HEK293 (cell line): ENCODE measurements at regions of chr6 and their contacts with region 1.

Region 1: DNA sequence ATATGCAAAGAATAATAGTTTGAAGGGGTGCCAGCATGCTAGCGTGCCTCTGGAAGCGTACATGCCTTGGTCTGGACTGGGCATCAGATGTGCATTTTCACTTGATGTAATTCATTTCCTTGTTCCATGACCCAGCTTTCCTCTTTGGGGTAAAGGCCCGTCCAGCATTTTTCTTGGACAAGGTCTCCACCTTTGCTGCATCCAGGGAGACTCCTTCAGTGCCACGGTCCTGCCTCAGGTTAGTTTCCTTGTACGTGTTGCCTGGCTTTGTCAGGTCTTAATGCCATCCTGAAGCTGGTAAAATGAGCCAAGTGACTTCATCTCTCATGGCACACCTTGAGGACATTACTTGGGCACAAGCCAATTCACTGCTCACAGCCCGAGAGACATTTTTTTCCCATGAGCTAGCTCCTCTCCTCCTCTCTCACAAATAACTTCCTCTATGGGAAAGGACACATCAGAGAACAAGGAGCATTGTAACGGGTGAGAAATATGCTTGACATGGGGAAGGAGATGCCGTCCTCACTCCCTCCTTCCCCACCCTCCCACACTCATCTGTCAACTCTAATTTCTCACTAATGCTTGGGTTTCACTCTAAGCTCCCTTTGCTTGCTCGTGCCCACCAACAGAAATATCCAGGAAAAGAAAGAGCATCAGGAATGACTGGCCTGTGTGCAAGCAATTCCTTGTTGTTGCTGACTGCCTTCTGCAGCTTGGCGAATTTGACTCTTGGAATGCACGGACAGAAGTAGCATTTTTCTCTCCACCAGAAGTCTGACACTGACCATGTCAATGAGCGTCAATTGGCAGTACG is 24.0 kb downstream of the EDN1 start:
- H3K4me3 ChIP-seq: no peak overlapping the region
- H3K27ac ChIP-seq: no peak overlapping the region
- H3K4me1 ChIP-seq: no peaks in the 10 kb centered on the region
- CTCF ChIP-seq: no peak

Region 2: GRCh38 chr6:12208190-12208589 is 106.0 kb before region 1 on chr6:
- CTCF ChIA-PET with region 1: no interaction called
- POLR2A ChIA-PET with region 1: no interaction called
- H3K4me3 ChIP-seq: no peak overlapping the region
- H3K27ac ChIP-seq: no peak overlapping the region
- H3K4me1 ChIP-seq: no peaks in the 10 kb centered on the region
- CTCF ChIP-seq: no peak

Region 3: DNA sequence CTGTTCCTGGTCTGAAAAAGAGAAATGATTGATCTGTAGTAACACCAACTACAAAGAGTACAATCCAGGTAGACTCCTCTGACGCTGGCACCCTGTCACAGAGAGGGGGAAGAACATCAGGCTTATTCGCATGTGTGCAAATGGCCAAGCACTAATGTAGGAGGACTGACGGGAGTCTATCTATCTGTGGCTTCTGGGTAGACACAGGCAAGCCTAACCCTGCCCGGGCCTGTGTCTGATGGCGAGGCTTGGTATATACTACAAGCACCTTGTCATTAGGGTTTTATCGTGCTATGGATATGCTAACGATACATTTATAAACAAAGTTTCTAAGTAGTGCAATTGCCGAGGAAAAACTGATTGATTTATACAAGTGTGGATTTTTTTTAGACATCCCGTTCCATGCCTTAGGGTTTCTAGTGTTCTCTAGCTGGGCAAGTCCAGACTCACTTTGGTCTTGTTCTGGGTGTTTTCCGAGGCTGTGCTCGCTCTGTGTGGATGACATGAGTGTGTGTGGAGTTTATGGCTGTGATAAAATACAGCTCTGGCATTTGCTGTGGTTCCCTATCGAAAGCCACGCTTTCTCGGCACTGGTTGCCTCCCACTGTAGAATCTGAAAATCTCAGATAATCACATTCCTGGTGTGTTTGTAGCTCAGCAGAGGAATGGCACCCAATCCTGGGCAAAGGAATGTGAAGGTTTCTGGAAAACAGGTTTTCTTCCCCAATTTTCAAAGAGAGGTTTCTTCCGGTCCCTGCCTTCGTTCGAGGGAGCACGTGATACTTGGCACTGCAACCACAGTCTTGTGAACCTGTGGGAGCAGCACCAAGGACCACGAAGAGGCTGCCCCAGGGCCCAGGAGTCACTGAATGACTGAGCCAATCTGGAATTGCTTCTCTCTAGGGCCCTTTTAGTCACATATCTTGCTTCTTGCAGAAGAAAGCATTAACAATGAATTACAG is 91.5 kb before region 1 on chr6:
- CTCF ChIA-PET with region 1: no interaction called
- POLR2A ChIA-PET with region 1: no interaction called
- H3K4me3 ChIP-seq: no peak overlapping the region
- H3K27ac ChIP-seq: no peak overlapping the region
- H3K4me1 ChIP-seq: no peaks in the 10 kb centered on the region
- CTCF ChIP-seq: no peak

Region 4: GRCh38 chr6:12324514-12325147 is 10.4 kb after region 1 on chr6:
- CTCF ChIA-PET with region 1: interaction called, 3 read pairs
- POLR2A ChIA-PET with region 1: interaction called, 10 read pairs
- H3K4me3 ChIP-seq: no peak overlapping the region
- H3K27ac ChIP-seq: no peak overlapping the region
- H3K4me1 ChIP-seq: peaks cover 4% of the 10 kb centered on the region; the same call in 1 of the 2 replicates
- CTCF ChIP-seq: no peak